ENCODE measurements at regions of chr3 and their contacts with region 1.

Region 1: DNA sequence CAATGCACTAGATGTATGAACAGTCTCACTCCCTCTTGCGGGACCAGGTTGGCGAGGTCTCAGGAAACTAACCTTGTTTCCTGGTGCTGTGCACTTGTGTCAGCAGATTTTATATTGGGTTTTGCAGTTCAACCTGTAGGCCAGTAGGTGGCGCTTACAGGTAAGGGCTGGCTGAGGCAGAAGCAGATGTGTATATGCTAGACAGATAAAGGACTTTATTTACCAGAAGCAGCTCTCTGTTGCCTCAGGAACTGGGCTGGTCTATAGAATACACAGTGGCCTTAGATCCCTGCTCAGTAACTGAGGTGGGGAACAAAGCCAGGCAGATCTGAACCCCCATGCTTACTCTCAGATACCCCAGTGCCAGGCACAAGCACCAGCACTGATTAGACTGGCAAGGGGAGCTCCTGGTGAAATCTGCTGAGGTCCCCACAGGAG is 296.8 kb downstream of the DOCK3 start:
- DNase-seq: peak; percentile 69 to 78 (median 76)
- H3K4me3 ChIP-seq: no peak overlapping the region
- H3K4me3 Mint-ChIP-seq: peak overlapping the region in 4 of 8 donors; percentile 5 to 57 (median 42)
- H3K27ac ChIP-seq: no peak overlapping the region
- H3K27ac Mint-ChIP-seq: peak overlapping the region in 4 of 7 donors; percentile 59 to 79 (median 72)
- H3K4me1 ChIP-seq: peaks cover 13% of the 10 kb centered on the region
- H3K4me1 Mint-ChIP-seq: peaks cover 11 to 18% (median 14%) of the 10 kb centered on the region in 4 donors
- H3K27me3 ChIP-seq: no peaks in the 10 kb centered on the region
- H3K27me3 Mint-ChIP-seq: no peaks in the 10 kb centered on the region

Region 2: GRCh38 chr3:50830451-50830850 is 141.1 kb before region 1 on chr3:
- CTCF ChIA-PET with region 1: no interaction called
- POLR2A ChIA-PET with region 1: no interaction called
- intact Hi-C with region 1: no loop called
- DNase-seq: no peak
- H3K4me3 ChIP-seq: no peak overlapping the region
- H3K4me3 Mint-ChIP-seq: no peak overlapping the region
- H3K27ac ChIP-seq: no peak overlapping the region
- H3K27ac Mint-ChIP-seq: no peak overlapping the region
- H3K4me1 ChIP-seq: no peaks in the 10 kb centered on the region
- H3K4me1 Mint-ChIP-seq: peaks cover 0 to 1% (median 0%) of the 10 kb centered on the region in 4 donors
- H3K27me3 ChIP-seq: no peaks in the 10 kb centered on the region
- H3K27me3 Mint-ChIP-seq: peaks cover 2 to 5% of the 10 kb centered on the region in 2 donors

Region 3: GRCh38 chr3:51082363-51082762 is 110.9 kb after region 1 on chr3:
- CTCF ChIA-PET with region 1: interaction called, 23 read pairs
- POLR2A ChIA-PET with region 1: no interaction called
- intact Hi-C with region 1: no loop called
- DNase-seq: peak in 3 of 5 donors; percentile 1 to 3 (median 1)
- H3K4me3 ChIP-seq: no peak overlapping the region
- H3K4me3 Mint-ChIP-seq: no peak overlapping the region
- H3K27ac ChIP-seq: no peak overlapping the region
- H3K27ac Mint-ChIP-seq: no peak overlapping the region
- H3K4me1 ChIP-seq: no peaks in the 10 kb centered on the region
- H3K4me1 Mint-ChIP-seq: no peaks in the 10 kb centered on the region
- H3K27me3 ChIP-seq: no peaks in the 10 kb centered on the region
- H3K27me3 Mint-ChIP-seq: no peaks in the 10 kb centered on the region

Region 4: GRCh38 chr3:51190199-51190839 is 218.8 kb after region 1 on chr3:
- CTCF ChIA-PET with region 1: interaction called, 33 read pairs
- POLR2A ChIA-PET with region 1: interaction called, 4 read pairs
- intact Hi-C with region 1: loop called (anchors 2 kb)
- DNase-seq: peak in 4 of 5 donors; percentile 6 to 10 (median 7)
- H3K4me3 ChIP-seq: no peak overlapping the region
- H3K4me3 Mint-ChIP-seq: no peak overlapping the region
- H3K27ac ChIP-seq: no peak overlapping the region
- H3K27ac Mint-ChIP-seq: peak overlapping the region in 1 of 7 donors; percentile 45
- H3K4me1 ChIP-seq: no peaks in the 10 kb centered on the region
- H3K4me1 Mint-ChIP-seq: peaks cover 0 to 9% (median 8%) of the 10 kb centered on the region in 4 donors
- H3K27me3 ChIP-seq: no peaks in the 10 kb centered on the region
- H3K27me3 Mint-ChIP-seq: peaks cover 0 to 2% of the 10 kb centered on the region in 2 donors

Region 5: GRCh38 chr3:51221959-51222358 is 250.5 kb after region 1 on chr3:
- CTCF ChIA-PET with region 1: no interaction called
- POLR2A ChIA-PET with region 1: no interaction called
- intact Hi-C with region 1: no loop called
- DNase-seq: no peak
- H3K4me3 ChIP-seq: no peak overlapping the region
- H3K4me3 Mint-ChIP-seq: no peak overlapping the region
- H3K27ac ChIP-seq: no peak overlapping the region
- H3K27ac Mint-ChIP-seq: no peak overlapping the region
- H3K4me1 ChIP-seq: no peaks in the 10 kb centered on the region
- H3K4me1 Mint-ChIP-seq: no peaks in the 10 kb centered on the region
- H3K27me3 ChIP-seq: no peaks in the 10 kb centered on the region
- H3K27me3 Mint-ChIP-seq: no peaks in the 10 kb centered on the region

Region 6: GRCh38 chr3:51311055-51311454 is 339.5 kb after region 1 on chr3:
- CTCF ChIA-PET with region 1: interaction called, 39 read pairs
- POLR2A ChIA-PET with region 1: no interaction called
- intact Hi-C with region 1: no loop called
- DNase-seq: peak in 4 of 5 donors; percentile 17 to 40 (median 30)
- H3K4me3 ChIP-seq: no peak overlapping the region
- H3K4me3 Mint-ChIP-seq: no peak overlapping the region
- H3K27ac ChIP-seq: no peak overlapping the region
- H3K27ac Mint-ChIP-seq: no peak overlapping the region
- H3K4me1 ChIP-seq: no peaks in the 10 kb centered on the region
- H3K4me1 Mint-ChIP-seq: no peaks in the 10 kb centered on the region
- H3K27me3 ChIP-seq: no peaks in the 10 kb centered on the region
- H3K27me3 Mint-ChIP-seq: peaks cover 0 to 3% of the 10 kb centered on the region in 2 donors

Region 7: DNA sequence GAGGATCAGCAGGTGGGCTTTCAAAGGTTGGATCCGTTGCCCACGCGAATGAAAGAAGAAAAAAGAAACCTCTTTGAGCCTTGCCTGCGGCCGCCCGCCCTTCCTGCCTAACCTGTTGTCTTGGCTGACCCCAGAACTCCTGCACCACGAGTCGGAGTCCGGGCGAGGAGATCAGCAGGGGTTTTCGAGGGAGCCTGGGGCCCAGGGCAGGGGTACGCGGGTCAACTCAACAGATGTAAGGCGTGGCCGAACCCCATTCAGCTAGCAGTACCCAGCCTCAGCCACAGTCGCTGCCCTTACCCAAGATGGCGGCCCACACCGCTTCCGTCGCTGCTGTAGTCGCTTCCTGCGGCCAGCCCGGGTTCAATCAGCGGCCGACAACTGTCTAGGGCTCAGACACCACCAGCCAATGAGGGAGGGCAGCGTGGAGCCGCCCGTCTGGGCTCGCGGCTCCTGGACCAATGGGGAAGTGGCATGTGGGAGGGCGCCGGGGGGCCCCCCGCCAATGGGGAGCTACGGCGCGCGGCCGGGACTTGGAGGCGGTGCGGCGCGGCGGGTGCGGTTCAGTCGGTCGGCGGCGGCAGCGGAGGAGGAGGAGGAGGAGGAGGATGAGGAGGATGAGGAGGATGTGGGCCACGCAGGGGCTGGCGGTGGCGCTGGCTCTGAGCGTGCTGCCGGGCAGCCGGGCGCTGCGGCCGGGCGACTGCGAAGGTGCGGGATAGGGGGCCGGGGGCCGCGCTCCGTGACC is 413.4 kb after region 1 on chr3 and contains the start of gene MANF:
- CTCF ChIA-PET with region 1: interaction called, 13 read pairs
- POLR2A ChIA-PET with region 1: interaction called, 13 read pairs
- intact Hi-C with region 1: loop called (anchors 5 kb)
- DNase-seq: peak; percentile 97 to 98 (median 98)
- H3K4me3 ChIP-seq: peak within 1 kb of the TSS; percentile 61 to 93
- H3K4me3 Mint-ChIP-seq: peak within 1 kb of the TSS; percentile 98 to 99 (median 99)
- H3K27ac ChIP-seq: peak within 1 kb of the TSS; percentile 92
- H3K27ac Mint-ChIP-seq: peak within 1 kb of the TSS; percentile 98 to 100 (median 99)
- H3K4me1 ChIP-seq: peaks cover 38% of the 10 kb centered on the region
- H3K4me1 Mint-ChIP-seq: peaks cover 25 to 62% (median 42%) of the 10 kb centered on the region in 4 donors
- H3K27me3 ChIP-seq: no peaks in the 10 kb centered on the region
- H3K27me3 Mint-ChIP-seq: no peaks in the 10 kb centered on the region
- total RNA-seq, gene MANF: 74.8 to 79.0 TPM

Measured in CD4-positive, alpha-beta memory T cell (primary cell).